Colonic mucosa (tissue), 4 donors: ENCODE measurements at regions of chr5 and their contacts with region 1.

Region 1: GRCh38 chr5:139968547-139969261 is 74.4 kb downstream of the NRG2 start:
- DNase-seq: peak; percentile 86
- H3K4me3 ChIP-seq: no peak overlapping the region
- H3K27ac ChIP-seq: no peak overlapping the region
- H3K4me1 ChIP-seq: no peaks in the 10 kb centered on the region
- H3K27me3 ChIP-seq: no peaks in the 10 kb centered on the region
- CTCF ChIP-seq: peak; percentile 99

Region 2: GRCh38 chr5:139560752-139561654 is 407.7 kb before region 1 on chr5 and contains the start of gene UBE2D2:
- intact Hi-C with region 1: no loop called
- DNase-seq: peak; percentile 98
- H3K4me3 ChIP-seq: peak within 1 kb of the TSS; percentile 87
- H3K27ac ChIP-seq: peak within 1 kb of the TSS; percentile 99
- H3K4me1 ChIP-seq: no peaks in the 10 kb centered on the region
- H3K27me3 ChIP-seq: no peaks in the 10 kb centered on the region
- CTCF ChIP-seq: no peak
- total RNA-seq, gene UBE2D2: 146 to 155 TPM

Region 3: DNA sequence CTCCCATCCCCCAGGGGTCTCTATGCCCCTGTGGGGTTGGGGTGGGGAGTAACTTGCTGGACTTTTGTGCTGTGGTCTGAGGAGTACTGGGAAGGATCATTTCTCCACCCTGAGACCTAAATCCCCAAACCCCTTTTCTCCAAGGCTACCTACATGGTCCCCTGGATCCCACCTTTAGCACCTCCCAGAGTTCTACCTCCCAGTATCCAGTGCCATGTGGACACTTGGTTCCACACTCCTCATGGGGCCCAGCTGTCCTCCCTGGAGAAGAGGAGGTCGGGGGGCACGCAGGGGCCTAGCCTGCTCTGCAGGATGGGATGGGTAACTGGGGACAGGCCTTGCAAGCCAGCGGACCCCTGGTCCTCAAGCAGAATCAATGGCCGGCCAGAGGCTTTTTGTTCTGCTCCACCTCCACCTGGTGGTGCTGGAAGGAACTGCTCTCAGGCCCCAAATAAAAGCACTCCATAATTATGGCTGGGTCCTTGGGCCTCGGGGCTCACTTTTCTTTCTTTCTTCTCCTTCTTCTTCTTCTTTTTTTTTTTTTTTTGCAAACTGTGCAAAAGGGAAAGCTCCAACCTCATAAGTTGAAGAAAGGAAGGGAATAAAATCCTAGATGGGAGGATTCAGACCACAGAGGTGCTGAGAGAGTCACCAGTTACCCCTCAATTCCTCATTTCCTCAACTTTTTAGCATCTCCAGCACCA is 104.7 kb before region 1 on chr5:
- intact Hi-C with region 1: loop called (anchors 10 kb)
- DNase-seq: peak; percentile 69
- H3K4me3 ChIP-seq: no peak overlapping the region
- H3K27ac ChIP-seq: no peak overlapping the region
- H3K4me1 ChIP-seq: no peaks in the 10 kb centered on the region
- H3K27me3 ChIP-seq: no peaks in the 10 kb centered on the region
- CTCF ChIP-seq: peak; percentile 88

Region 4: GRCh38 chr5:140157032-140157803 is 188.5 kb after region 1 on chr5:
- intact Hi-C with region 1: no loop called
- DNase-seq: peak; percentile 93
- H3K4me3 ChIP-seq: peak overlapping the region; percentile 31
- H3K27ac ChIP-seq: no peak overlapping the region
- H3K4me1 ChIP-seq: peaks cover 3% of the 10 kb centered on the region
- H3K27me3 ChIP-seq: no peaks in the 10 kb centered on the region
- CTCF ChIP-seq: peak; percentile 87